ENCODE measurements at regions of chr2 and their contacts with region 1.

Region 1: DNA sequence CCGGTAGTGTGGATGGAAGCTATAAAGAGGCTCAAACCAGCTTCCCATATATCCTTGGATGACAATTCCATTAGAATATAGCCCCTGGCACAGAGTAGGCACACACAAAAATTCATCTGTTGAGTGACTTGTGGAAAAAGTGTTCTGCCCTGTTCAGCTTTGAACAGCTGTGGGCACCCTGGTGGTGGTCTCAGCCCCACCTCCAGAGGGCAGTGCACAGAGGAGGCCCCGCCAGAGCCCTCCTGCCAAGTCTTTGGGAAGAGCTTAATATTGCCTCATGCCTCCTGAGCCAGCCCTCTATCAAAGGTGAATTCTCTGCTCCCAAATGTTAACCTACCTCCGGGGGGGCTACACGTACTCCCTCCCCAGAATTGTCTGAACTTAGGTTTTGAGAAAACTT is 30.4 kb downstream of the EPAS1 start:
- DNase-seq: no peak
- H3K4me3 ChIP-seq: no peak overlapping the region
- H3K27ac ChIP-seq: no peak overlapping the region
- H3K4me1 ChIP-seq: peaks cover 0 to 7% (median 2%) of the 10 kb centered on the region in 4 experiments; a peak in 4 of 7 replicates
- H3K27me3 ChIP-seq: no peaks in the 10 kb centered on the region; a peak in 2 of 7 replicates
- CTCF ChIP-seq: peak; percentile 47 to 61 (median 54)
- EP300 ChIP-seq: no peak
- POLR2A ChIP-seq: no peak
- RAD21 ChIP-seq: peak in 1 of 2 experiments; percentile 34; a peak in 1 of 4 replicates

Region 2: GRCh38 chr2:46306330-46306751 is 21.3 kb before region 1 on chr2:
- CTCF ChIA-PET with region 1: interaction called, 11 read pairs
- POLR2A ChIA-PET with region 1: interaction called, 3 read pairs
- DNase-seq: no peak
- H3K4me3 ChIP-seq: no peak overlapping the region
- H3K27ac ChIP-seq: no peak overlapping the region
- H3K4me1 ChIP-seq: peaks cover 0 to 8% (median under 1%) of the 10 kb centered on the region in 4 experiments; a peak in 3 of 7 replicates
- H3K27me3 ChIP-seq: peaks cover 0 to 6% (median 2%) of the 10 kb centered on the region in 4 experiments; a peak in 4 of 7 replicates
- CTCF ChIP-seq: no peak
- EP300 ChIP-seq: no peak
- POLR2A ChIP-seq: no peak
- RAD21 ChIP-seq: no peak

Region 3: GRCh38 chr2:46339667-46340459 is 12.2 kb after region 1 on chr2:
- CTCF ChIA-PET with region 1: interaction called, 13 read pairs
- POLR2A ChIA-PET with region 1: interaction called, 4 read pairs
- DNase-seq: no peak
- H3K4me3 ChIP-seq: no peak overlapping the region
- H3K27ac ChIP-seq: no peak overlapping the region
- H3K4me1 ChIP-seq: peaks cover 0 to 9% (median 7%) of the 10 kb centered on the region in 4 experiments; a peak in 6 of 7 replicates
- H3K27me3 ChIP-seq: no peaks in the 10 kb centered on the region; a peak in 1 of 7 replicates
- CTCF ChIP-seq: no peak
- EP300 ChIP-seq: no peak
- POLR2A ChIP-seq: no peak
- RAD21 ChIP-seq: no peak

Region 4: DNA sequence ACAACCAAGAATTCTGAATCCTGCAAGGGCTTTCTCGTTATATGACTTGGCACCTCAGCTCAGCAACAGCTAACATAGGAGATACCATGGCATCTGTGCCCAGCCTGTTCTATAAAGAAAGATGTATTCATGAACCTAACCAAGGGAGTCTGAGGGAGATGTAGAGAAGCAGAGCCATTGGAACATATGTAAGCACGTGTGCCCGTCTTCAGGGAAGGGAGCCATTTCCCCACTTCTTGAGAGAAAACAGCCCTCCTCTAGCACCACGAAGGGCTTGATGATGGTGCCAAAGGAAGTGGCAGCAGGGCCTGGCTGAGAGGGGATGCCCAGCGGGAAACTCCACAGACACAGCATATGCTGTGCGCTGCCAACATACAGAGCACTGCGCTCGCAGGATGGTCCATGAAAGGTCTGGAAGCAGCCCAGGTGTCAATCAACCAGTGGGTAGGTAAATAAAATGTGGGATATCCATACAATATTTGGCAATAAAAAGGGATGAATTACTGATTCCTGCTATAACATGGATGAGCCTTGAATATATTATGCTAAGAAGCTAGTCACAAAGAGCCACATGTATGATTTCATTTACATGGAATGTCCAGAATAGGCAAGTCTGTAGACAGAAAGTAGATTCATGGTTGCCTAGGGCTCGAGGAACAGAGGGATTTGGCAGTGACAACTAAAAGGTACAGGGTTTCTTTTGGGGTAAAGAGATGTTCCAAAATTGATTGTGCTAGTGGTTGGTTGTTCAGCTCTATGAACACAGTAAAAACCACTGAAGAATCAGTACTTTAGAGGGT is 167.8 kb after region 1 on chr2:
- CTCF ChIA-PET with region 1: no interaction called
- POLR2A ChIA-PET with region 1: no interaction called
- DNase-seq: no peak
- H3K4me3 ChIP-seq: no peak overlapping the region
- H3K27ac ChIP-seq: no peak overlapping the region
- H3K4me1 ChIP-seq: peaks cover 0 to 5% (median 1%) of the 10 kb centered on the region in 4 experiments; a peak in 3 of 7 replicates
- H3K27me3 ChIP-seq: peaks cover 0 to 14% (median 3%) of the 10 kb centered on the region in 4 experiments; a peak in 5 of 7 replicates
- CTCF ChIP-seq: no peak
- EP300 ChIP-seq: no peak
- POLR2A ChIP-seq: no peak
- RAD21 ChIP-seq: no peak

Region 5: GRCh38 chr2:46706264-46706983 is 378.8 kb after region 1 on chr2:
- CTCF ChIA-PET with region 1: no interaction called
- POLR2A ChIA-PET with region 1: no interaction called
- DNase-seq: no peak
- H3K4me3 ChIP-seq: peak overlapping the region in 1 of 4 experiments; percentile 52; a peak in 1 of 8 replicates
- H3K27ac ChIP-seq: no peak overlapping the region
- H3K4me1 ChIP-seq: peaks cover 5 to 47% (median 16%) of the 10 kb centered on the region in 4 experiments
- H3K27me3 ChIP-seq: no peaks in the 10 kb centered on the region
- CTCF ChIP-seq: no peak
- EP300 ChIP-seq: no peak
- POLR2A ChIP-seq: no peak
- RAD21 ChIP-seq: no peak